Activated T-helper 2 cell treated with anti-CD3 and anti-CD28 coated beads, Interferon-gamma antibody, Interleukin-2, Interleukin-4, amounts not matched to agents 10 μg/mL and 5 μg/mL and 100 μg/mL, durations not matched to agents 14 hours and 24 hours and 36 hours (primary cell): ENCODE measurements at regions of chr2 and their contacts with region 1.

Region 1: DNA sequence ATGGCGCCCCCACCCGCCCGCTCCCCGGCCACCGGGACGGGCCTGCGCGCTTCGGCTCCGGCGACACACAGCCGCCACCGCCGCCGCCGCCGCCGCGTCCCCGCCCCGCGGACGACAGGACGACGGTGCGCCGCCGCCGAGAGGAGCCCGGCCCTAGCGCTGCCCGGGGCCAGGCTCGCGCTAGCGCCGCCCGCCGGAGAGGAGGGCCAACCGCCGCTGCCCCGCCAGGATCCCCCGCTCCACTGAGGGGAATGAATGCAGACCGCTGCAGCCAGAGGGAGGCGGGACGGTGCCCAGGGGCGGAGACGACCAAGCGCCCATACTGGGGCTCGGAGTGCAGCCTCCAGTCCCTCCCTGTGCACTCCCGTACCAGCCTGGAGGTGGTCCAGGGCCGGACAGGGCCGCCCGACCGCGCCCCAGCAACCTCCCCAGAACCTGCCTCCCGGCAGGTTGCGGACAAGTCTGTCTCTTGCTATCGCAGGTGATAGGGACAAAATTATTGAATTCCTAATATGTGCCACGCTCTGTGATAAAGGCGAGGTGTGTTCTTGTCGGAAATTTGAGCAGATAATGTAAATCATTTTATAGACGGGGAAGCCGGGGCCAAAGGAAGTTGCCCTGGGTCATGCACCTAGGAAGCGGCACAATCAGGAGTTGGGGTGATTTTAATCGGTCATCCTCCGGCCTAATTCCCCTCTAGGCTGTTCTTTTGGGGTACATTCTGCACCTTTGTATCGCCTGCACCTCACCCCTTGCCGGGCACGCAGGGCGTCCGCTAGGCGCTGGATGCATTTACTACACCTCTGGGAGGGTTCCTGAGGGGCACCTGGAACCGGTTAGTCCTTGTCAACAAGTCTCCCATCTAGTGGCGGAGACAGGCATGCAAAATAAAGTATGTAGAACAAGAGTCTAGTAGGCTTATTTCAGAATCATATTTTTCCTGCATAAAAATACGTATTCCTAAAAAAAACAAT is at the start of gene TEX261:
- DNase-seq: peak; percentile 89
- H3K4me3 Mint-ChIP-seq: peak within 1 kb of the TSS; percentile 97
- H3K27ac Mint-ChIP-seq: peak within 1 kb of the TSS; percentile 95
- H3K4me1 Mint-ChIP-seq: peaks cover 31% of the 10 kb centered on the region
- H3K27me3 Mint-ChIP-seq: no peaks in the 10 kb centered on the region
- total RNA-seq, gene TEX261: 67.9 and 68.8 TPM in 2 replicates

Region 2: DNA sequence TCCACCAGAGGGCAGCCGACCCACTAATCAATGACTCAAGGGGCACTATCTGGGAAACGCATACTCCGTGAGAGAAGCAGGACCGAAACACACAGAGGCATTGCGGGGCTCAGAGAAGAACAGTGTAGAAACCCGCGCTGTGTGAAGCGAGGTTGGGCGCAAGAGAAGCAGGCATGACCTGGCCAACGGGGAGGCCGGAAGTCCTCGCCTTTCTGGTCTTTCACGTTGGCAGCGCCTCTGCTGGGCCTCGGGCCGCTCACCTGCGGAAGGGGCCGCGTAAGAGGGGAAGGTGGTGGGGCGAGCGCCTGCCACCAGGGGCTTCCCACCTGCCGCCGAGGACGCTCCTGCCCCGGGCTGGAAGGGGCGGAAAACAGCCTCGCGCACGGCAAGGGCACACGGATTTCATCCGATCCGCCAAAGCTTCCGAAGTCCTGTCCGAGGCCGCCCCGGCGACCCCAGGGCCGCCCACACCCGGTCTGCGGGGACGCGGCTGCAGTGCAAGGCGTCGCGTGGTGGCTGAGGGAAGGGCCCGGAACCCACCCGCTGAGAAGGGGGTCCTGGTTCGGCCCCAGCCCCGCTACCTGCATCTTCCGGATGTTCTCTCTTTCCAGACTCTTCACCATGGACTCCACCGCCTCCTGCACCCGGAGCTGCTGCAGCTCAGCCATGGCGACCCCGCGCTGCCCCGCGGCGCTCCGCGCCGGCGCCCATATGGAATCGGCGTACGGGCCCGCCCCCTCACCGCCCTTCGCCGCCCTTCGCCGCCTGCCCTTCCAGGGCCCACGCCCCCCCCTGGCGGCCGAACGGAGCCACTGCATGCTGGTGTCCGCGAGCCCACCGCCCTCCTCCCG is 693.5 kb before region 1 on chr2 and contains the start of gene FAM136A:
- intact Hi-C with region 1: loop called (anchors 10 kb)
- DNase-seq: peak; percentile 86
- H3K4me3 Mint-ChIP-seq: peak within 1 kb of the TSS; percentile 88
- H3K27ac Mint-ChIP-seq: peak within 1 kb of the TSS; percentile 90
- H3K4me1 Mint-ChIP-seq: peaks cover 31% of the 10 kb centered on the region
- H3K27me3 Mint-ChIP-seq: no peaks in the 10 kb centered on the region
- total RNA-seq, gene FAM136A: 71.3 and 71.8 TPM in 2 replicates

Region 3: GRCh38 chr2:70964596-70965386 is 30.3 kb before region 1 on chr2:
- intact Hi-C with region 1: loop called (anchors 2 kb)
- DNase-seq: peak; percentile 72
- H3K4me3 Mint-ChIP-seq: peak overlapping the region; percentile 80
- H3K27ac Mint-ChIP-seq: no peak overlapping the region
- H3K4me1 Mint-ChIP-seq: peaks cover 3% of the 10 kb centered on the region
- H3K27me3 Mint-ChIP-seq: peaks cover 38% of the 10 kb centered on the region

Region 4: DNA sequence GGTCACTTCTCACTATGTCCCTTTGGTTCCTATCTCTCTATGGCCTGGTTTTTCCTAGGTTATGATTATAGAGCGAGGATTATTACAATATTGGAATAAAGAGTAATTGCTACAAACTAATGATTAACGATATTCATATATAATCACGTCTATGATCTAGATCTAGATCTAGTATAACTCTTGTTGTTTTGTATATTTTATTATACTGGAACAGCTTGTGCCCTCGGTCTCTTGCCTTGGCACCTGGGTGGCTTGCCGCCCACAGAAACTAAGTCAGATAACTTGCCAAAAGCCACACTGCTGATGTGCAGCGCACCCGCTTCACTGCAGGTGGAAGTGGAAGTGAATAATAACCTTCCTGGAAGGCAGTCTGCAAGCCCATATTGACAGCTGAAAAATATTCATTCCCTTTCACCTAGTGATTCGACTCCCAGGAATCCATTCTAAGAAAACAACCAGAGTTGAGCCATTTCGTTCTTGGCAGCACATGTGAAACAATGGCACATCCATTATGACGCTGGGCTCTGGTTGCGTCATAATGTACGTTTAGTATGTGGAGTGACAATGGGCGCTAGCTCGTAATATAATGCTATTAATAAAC is 17.3 kb before region 1 on chr2:
- intact Hi-C with region 1: loop called (anchors 2 kb)
- DNase-seq: no peak
- H3K4me3 Mint-ChIP-seq: peak overlapping the region; percentile 73
- H3K27ac Mint-ChIP-seq: peak overlapping the region; percentile 77
- H3K4me1 Mint-ChIP-seq: peaks cover 13% of the 10 kb centered on the region
- H3K27me3 Mint-ChIP-seq: peaks cover 8% of the 10 kb centered on the region

Region 5: GRCh38 chr2:71130113-71130904 is 135.3 kb after region 1 on chr2 and contains the starts of genes MCEE and MPHOSPH10:
- intact Hi-C with region 1: no loop called
- DNase-seq: peak; percentile 87
- H3K4me3 Mint-ChIP-seq: no peak within 1 kb of the TSS
- H3K27ac Mint-ChIP-seq: no peak within 1 kb of the TSS
- H3K4me1 Mint-ChIP-seq: peaks cover 13% of the 10 kb centered on the region
- H3K27me3 Mint-ChIP-seq: no peaks in the 10 kb centered on the region
- total RNA-seq, gene MCEE: 12.8 and 14.3 TPM in 2 replicates
- total RNA-seq, gene MPHOSPH10: 52.3 and 54.3 TPM in 2 replicates